Endothelial cell of umbilical vein (primary cell): ENCODE measurements at regions of chr6 and their contacts with region 1.

Region 1: DNA sequence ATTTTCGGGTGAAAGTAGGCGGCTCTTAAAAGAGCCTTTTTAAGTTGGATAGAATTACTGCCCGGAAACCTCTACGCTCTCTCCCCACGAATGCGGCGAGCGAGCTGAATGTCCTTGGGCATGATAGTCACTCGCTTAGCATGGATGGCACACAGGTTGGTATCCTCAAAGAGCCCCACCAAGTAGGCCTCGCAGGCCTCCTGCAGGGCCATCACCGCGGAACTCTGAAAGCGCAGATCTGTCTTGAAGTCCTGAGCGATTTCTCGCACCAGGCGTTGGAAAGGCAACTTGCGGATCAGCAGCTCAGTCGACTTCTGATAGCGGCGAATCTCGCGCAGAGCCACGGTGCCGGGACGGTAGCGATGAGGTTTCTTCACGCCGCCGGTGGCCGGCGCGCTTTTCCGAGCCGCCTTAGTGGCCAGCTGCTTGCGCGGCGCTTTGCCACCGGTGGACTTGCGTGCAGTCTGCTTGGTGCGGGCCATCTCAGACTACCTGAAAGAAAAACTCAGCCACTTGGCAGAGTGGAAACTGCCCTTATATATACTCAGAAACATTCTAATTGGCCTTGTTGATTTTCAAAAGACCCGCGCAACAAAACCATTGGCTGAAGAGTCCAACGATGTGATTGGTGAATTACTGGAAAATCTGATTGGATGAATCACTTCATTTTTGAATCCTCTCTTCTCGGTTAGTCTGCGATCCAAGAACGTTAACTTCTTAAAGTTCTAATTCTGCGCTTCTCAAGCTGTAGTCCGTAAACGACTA is 93.9 kb upstream of the BTN3A2 start:
- DNase-seq: peak; percentile 93
- H3K4me3 ChIP-seq: peak overlapping the region; percentile 41 to 77 (median 51)
- H3K27ac ChIP-seq: peak overlapping the region; percentile 72
- H3K4me1 ChIP-seq: peaks cover 25% of the 10 kb centered on the region
- H3K27me3 ChIP-seq: no peaks in the 10 kb centered on the region
- CTCF ChIP-seq: no peak
- POLR2A ChIP-seq: peak; percentile 90

Region 2: DNA sequence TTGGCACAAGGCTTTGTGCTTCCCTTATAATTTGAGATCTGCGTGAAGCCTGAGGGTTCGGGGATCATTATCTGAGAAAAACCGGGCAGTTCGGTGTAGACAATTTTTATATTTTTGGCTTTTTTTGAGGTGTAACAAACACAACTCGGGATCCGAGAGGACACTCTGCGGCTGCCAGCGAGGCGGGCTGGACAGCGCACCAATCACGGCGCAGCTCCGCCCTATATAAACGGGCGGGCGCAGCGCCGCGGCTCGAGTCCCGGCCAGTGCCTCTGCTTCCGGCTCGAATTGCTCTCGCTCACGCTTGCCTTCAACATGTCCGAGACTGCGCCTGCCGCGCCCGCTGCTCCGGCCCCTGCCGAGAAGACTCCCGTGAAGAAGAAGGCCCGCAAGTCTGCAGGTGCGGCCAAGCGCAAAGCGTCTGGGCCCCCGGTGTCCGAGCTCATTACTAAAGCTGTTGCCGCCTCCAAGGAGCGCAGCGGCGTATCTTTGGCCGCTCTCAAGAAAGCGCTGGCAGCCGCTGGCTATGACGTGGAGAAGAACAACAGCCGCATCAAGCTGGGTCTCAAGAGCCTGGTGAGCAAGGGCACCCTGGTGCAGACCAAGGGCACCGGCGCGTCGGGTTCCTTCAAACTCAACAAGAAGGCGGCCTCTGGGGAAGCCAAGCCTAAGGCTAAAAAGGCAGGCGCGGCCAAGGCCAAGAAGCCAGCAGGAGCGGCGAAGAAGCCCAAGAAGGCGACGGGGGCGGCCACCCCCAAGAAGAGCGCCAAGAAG is 114.8 kb before region 1 on chr6:
- CTCF ChIA-PET with region 1: interaction called, 3 read pairs
- POLR2A ChIA-PET with region 1: interaction called, 8 read pairs
- dilution Hi-C with region 1: no loop called
- intact Hi-C with region 1: loop called (anchors 5 kb)
- DNase-seq: peak; percentile 94
- H3K4me3 ChIP-seq: peak overlapping the region; percentile 45 to 81 (median 68)
- H3K27ac ChIP-seq: peak overlapping the region; percentile 78
- H3K4me1 ChIP-seq: peaks cover 8% of the 10 kb centered on the region
- H3K27me3 ChIP-seq: peaks cover 0 to 3% of the 10 kb centered on the region in 2 experiments
- CTCF ChIP-seq: no peak
- POLR2A ChIP-seq: peak; percentile 97

Region 3: GRCh38 chr6:26216356-26216885 is 54.7 kb before region 1 on chr6:
- CTCF ChIA-PET with region 1: interaction called, 9 read pairs
- POLR2A ChIA-PET with region 1: interaction called, 60 read pairs
- dilution Hi-C with region 1: no loop called
- intact Hi-C with region 1: loop called (anchors 1 kb)
- DNase-seq: peak; percentile 99
- H3K4me3 ChIP-seq: peak overlapping the region in 2 of 3 experiments; percentile 42 to 82
- H3K27ac ChIP-seq: peak overlapping the region; percentile 89
- H3K4me1 ChIP-seq: peaks cover 6% of the 10 kb centered on the region
- H3K27me3 ChIP-seq: no peaks in the 10 kb centered on the region
- CTCF ChIP-seq: no peak
- POLR2A ChIP-seq: peak; percentile 99

Region 4: DNA sequence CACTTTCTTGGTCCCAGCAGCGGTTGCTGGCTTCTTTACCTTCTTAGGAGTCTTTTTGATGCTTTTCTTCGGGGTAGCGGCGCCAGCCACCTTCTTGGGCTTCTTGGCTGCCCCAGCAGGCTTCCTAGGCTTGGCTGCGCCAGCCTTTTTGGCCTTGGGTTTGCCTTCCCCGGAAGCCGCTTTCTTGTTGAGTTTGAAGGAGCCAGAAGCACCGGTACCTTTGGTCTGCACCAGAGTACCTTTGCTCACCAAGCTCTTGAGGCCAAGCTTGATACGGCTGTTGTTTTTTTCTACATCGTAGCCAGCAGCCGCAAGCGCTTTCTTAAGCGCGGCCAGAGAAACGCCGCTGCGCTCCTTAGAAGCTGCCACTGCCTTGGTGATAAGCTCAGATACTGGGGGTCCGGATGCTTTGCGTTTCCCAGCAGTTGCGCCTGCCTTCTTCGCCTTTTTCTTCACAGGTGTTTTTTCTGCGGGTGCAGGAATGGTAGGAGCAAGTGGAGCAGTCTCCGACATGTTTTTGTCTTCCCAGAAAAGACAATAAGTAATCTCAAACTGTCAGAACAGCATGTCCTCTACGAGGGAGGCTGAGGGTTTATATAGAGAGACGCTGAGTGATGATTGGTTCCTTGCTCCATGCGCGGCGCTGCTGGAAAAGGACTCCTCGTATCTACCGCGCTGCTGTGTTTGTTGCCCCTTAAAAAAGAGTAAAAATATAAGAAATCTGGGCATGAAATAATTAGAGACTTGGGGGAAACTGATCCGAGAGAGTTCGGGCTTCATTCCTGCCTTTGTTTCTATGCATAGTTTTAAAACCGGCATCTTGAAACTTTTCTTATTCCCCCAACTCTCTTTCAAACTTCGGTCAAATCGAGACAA is 36.4 kb before region 1 on chr6:
- CTCF ChIA-PET with region 1: interaction called, 9 read pairs
- POLR2A ChIA-PET with region 1: interaction called, 18 read pairs
- dilution Hi-C with region 1: no loop called
- intact Hi-C with region 1: no loop called
- DNase-seq: peak; percentile 89
- H3K4me3 ChIP-seq: peak overlapping the region; percentile 30 to 73 (median 59)
- H3K27ac ChIP-seq: peak overlapping the region; percentile 83
- H3K4me1 ChIP-seq: peaks cover 25% of the 10 kb centered on the region
- H3K27me3 ChIP-seq: no peaks in the 10 kb centered on the region
- CTCF ChIP-seq: no peak
- POLR2A ChIP-seq: peak; percentile 5

Region 5: GRCh38 chr6:26249957-26250697 is 21.0 kb before region 1 on chr6:
- CTCF ChIA-PET with region 1: interaction called, 29 read pairs
- POLR2A ChIA-PET with region 1: interaction called, 5 read pairs
- dilution Hi-C with region 1: no loop called
- intact Hi-C with region 1: loop called (anchors 1 kb)
- DNase-seq: peak; percentile 87
- H3K4me3 ChIP-seq: peak overlapping the region; percentile 27 to 85 (median 49)
- H3K27ac ChIP-seq: peak overlapping the region; percentile 67
- H3K4me1 ChIP-seq: peaks cover 3% of the 10 kb centered on the region
- H3K27me3 ChIP-seq: no peaks in the 10 kb centered on the region
- CTCF ChIP-seq: peak; percentile 28 to 52
- POLR2A ChIP-seq: peak; percentile 87

Region 6: DNA sequence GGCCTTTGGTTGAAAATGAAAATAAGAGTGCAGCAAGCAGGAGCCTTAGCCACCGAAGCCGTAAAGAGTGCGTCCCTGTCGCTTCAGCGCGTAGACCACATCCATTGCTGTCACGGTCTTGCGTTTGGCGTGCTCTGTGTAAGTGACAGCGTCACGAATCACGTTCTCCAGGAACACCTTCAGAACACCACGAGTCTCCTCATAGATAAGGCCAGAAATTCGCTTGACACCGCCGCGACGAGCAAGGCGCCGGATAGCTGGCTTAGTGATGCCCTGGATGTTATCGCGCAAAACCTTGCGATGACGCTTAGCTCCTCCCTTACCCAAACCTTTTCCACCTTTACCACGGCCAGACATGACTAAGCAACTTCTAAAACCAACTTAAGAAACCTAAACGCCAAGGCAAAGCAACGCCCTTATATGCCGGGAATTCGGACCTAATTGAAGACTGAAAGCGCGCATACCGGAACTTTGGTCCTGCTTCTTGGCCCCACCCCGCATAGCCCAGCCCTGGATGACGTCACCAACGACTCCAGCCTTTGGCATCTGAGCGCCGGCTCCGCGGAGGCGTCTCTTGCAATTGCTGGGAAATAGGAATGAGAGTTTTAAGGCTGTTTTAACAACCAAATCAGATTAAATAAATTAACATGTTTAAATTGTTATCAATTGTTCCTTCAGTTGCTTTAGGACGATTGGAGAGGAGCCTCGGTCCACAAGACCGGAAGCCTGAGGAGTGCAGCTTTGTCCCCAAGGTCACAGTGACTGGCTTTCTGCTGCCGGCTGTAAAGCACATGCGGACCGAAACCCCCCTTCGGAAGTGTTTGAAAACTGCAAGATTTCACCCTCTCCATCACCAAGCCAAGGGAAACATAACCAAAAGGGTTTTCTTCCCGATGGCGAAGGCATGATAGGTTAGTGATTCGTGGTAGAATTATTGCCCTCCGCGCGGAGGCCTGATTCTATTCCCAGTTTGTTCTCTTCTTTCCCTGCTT is 14.4 kb after region 1 on chr6:
- CTCF ChIA-PET with region 1: interaction called, 23 read pairs
- POLR2A ChIA-PET with region 1: interaction called, 26 read pairs
- dilution Hi-C with region 1: no loop called
- intact Hi-C with region 1: loop called (anchors 1 kb)
- DNase-seq: peak; percentile 98
- H3K4me3 ChIP-seq: peak overlapping the region; percentile 5 to 68 (median 58)
- H3K27ac ChIP-seq: peak overlapping the region; percentile 68
- H3K4me1 ChIP-seq: no peaks in the 10 kb centered on the region
- H3K27me3 ChIP-seq: no peaks in the 10 kb centered on the region
- CTCF ChIP-seq: no peak
- POLR2A ChIP-seq: peak; percentile 99

Region 7: DNA sequence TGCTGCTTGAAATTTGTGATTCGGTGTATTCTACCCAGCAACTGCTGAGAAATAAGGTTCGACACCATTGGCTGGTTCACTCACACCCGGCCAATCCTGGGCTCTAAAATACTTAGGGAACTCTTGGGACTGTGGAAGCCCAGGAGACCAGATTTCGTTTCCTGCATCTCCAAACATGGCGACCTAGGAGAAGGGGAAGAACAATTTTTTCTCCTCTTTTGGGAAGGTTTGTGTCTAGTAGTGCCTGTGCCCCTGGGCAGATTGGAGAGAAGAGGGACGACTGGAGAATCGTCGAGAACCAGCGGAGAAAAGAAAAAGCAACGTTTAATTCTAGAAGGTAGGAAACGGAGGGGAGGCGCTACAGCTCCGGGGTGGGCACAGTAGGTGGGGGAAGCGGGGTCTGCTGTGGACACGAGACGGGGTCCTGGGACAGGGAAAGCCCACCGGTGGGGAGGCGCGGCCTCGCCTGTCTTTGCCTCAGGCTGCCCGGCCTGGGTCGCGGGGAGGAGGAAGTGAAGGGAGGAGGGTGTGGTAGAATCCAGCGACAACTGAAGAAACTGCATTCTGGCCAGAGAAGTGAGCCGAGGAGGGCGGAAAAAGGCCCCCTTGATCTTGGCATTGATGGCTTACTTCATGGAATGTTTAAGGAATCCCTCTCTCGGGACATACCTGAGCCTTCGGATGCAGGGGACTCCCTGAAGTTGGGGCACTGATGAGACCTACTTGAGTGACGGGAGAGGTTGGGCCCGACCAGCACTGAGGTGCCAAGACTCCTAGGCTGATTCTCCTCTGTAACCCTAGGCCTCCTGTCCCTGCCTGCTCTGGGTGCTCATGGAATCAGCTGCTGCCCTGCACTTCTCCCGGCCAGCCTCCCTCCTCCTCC is 187.0 kb after region 1 on chr6 and contains the start of gene BTN2A1:
- CTCF ChIA-PET with region 1: no interaction called
- POLR2A ChIA-PET with region 1: no interaction called
- dilution Hi-C with region 1: no loop called
- intact Hi-C with region 1: no loop called
- DNase-seq: peak; percentile 97
- H3K4me3 ChIP-seq: peak within 1 kb of the TSS; percentile 92 to 99 (median 99)
- H3K27ac ChIP-seq: peak within 1 kb of the TSS; percentile 92
- H3K4me1 ChIP-seq: peaks cover 20% of the 10 kb centered on the region
- H3K27me3 ChIP-seq: no peaks in the 10 kb centered on the region
- CTCF ChIP-seq: no peak
- POLR2A ChIP-seq: peak; percentile 18
- total RNA-seq, gene BTN2A1: 23.4 and 25.1 TPM in 2 replicates

Region 8: DNA sequence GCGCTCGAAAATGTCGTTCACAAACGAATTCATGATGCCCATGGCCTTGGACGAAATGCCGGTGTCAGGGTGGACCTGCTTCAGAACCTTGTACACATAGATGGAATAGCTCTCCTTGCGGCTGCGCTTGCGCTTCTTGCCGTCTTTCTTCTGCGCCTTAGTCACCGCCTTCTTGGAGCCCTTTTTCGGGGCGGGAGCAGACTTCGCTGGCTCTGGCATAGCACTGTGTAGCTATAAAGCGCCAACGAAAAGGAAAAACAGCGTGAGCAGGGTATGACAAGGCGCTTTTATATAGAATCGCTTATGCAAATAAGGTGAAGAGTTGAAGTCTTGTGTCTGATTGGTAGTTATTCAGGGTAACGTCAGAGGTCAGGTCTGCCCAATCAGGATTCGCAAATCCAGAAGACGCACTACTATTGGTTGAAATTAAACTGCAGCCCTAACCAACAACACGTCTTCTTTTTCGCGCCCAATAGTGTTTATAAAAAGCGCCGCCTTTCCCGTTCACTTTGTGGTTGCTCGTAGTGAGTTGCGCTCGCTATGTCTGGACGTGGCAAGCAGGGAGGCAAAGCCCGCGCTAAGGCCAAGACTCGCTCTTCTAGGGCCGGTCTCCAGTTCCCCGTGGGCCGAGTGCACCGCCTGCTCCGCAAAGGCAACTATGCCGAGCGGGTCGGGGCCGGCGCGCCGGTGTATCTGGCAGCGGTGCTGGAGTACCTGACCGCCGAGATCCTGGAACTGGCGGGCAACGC is 861.6 kb after region 1 on chr6:
- CTCF ChIA-PET with region 1: no interaction called
- POLR2A ChIA-PET with region 1: interaction called, 4 read pairs
- dilution Hi-C with region 1: no loop called
- intact Hi-C with region 1: loop called (anchors 2 kb)
- DNase-seq: peak; percentile 100
- H3K4me3 ChIP-seq: peak overlapping the region; percentile 37 to 81 (median 59)
- H3K27ac ChIP-seq: peak overlapping the region; percentile 86
- H3K4me1 ChIP-seq: peaks cover 19% of the 10 kb centered on the region
- H3K27me3 ChIP-seq: no peaks in the 10 kb centered on the region
- CTCF ChIP-seq: no peak
- POLR2A ChIP-seq: peak; percentile 76